CD4-positive, alpha-beta T cell (primary cell): ENCODE measurements at regions of chr7 and their contacts with region 1.

Region 1: DNA sequence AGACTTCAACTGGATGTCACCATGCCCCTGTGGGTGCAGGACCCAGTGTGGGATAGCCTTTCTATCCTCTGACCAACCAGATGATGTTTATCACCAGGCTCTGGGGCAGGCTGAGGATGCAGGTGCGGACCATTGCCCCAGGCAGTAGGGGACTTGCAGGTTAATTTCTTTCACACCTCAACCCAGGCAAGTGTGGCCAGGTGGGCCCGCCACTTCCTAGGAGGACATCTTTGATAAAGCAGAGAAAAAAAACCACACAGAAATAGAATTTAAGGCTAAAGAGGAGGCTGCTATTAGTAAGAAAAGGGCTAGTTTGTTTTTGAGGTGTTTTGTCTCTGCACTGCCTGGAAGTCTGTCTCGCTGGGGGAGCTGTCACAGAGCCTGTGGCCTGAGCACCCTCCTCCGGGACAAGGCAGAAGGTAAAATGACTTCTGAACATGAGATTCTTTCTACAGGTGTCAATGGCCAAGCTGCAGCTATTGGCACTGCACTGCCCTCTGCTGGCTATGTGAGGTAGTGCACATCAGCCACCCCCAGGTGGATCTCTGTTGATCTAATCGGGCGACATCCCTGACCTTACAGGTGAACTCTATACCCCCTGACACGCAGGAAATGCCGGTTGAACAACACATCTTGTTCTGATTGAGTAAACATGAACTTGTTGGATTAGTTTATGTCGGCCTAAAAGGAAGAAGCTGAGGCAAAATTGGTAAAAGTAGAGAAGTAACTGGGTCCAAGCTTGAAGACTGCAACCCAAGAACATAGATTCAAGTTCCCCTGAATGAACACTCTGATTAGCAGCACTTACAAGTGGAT is 21.0 kb downstream of the UPP1 start:
- DNase-seq: peak; percentile 79 to 96 (median 91)
- ATAC-seq: peak; percentile 98
- H3K4me3 ChIP-seq: no peak overlapping the region
- H3K4me3 Mint-ChIP-seq: no peak overlapping the region
- H3K27ac ChIP-seq: no peak overlapping the region
- H3K27ac Mint-ChIP-seq: peak overlapping the region; percentile 25
- H3K4me1 ChIP-seq: peaks cover 12% of the 10 kb centered on the region
- H3K4me1 Mint-ChIP-seq: peaks cover 10% of the 10 kb centered on the region
- H3K27me3 ChIP-seq: no peaks in the 10 kb centered on the region
- H3K27me3 Mint-ChIP-seq: no peaks in the 10 kb centered on the region
- CTCF ChIP-seq: peak; percentile 98

Region 2: GRCh38 chr7:47557986-47558670 is 551.9 kb before region 1 on chr7:
- CTCF ChIA-PET with region 1: no interaction called
- POLR2A ChIA-PET with region 1: no interaction called
- intact Hi-C with region 1: no loop called
- DNase-seq: no peak
- ATAC-seq: no peak
- H3K4me3 ChIP-seq: no peak overlapping the region
- H3K4me3 Mint-ChIP-seq: no peak overlapping the region
- H3K27ac ChIP-seq: no peak overlapping the region
- H3K27ac Mint-ChIP-seq: no peak overlapping the region
- H3K4me1 ChIP-seq: no peaks in the 10 kb centered on the region
- H3K4me1 Mint-ChIP-seq: no peaks in the 10 kb centered on the region
- H3K27me3 ChIP-seq: no peaks in the 10 kb centered on the region
- H3K27me3 Mint-ChIP-seq: no peaks in the 10 kb centered on the region
- CTCF ChIP-seq: no peak

Region 3: DNA sequence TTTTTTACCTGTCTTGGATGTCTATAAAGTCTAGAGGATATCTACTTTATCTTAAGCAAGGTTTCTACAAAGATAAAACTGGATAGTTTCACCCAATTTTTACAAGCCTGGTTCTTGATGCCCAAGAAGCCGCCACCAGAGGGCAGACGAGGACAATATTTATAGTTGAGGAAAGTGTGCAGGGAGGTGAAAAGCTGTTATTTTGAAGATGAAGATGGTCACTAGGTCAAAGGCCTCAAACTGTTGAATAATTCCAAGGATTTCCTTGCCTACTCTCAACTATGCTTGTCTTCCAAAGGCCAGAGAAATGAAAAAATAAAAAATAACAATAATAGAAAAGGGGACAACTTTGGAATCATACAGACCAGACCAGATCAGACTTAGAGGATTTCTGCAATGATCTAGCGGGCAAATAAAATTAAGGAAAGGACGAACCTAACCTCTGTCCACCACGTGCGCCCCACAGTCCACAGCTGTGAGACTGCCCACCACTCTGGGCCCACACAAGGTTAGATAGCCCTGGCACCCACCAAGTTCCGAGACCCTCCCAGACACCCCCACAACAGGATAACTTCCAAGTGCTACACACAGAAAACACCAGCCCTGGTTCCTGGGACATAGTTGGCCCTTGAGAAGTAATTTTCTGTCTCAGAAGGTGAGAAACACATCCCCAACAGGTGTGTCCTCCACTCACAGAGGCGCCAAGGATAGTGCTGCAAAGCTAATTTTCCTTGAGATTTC is 164.6 kb before region 1 on chr7:
- CTCF ChIA-PET with region 1: interaction called, 25 read pairs
- POLR2A ChIA-PET with region 1: no interaction called
- intact Hi-C with region 1: loop called (anchors 1 kb)
- DNase-seq: peak; percentile 57 to 84 (median 72)
- ATAC-seq: peak; percentile 54
- H3K4me3 ChIP-seq: no peak overlapping the region
- H3K4me3 Mint-ChIP-seq: no peak overlapping the region
- H3K27ac ChIP-seq: no peak overlapping the region
- H3K27ac Mint-ChIP-seq: no peak overlapping the region
- H3K4me1 ChIP-seq: no peaks in the 10 kb centered on the region
- H3K4me1 Mint-ChIP-seq: no peaks in the 10 kb centered on the region
- H3K27me3 ChIP-seq: no peaks in the 10 kb centered on the region
- H3K27me3 Mint-ChIP-seq: no peaks in the 10 kb centered on the region
- CTCF ChIP-seq: peak; percentile 86

Region 4: GRCh38 chr7:47979145-47979831 is 130.8 kb before region 1 on chr7 and contains the start of gene HUS1:
- CTCF ChIA-PET with region 1: interaction called, 12 read pairs
- POLR2A ChIA-PET with region 1: no interaction called
- intact Hi-C with region 1: loop called in 1 of 2 experiments (anchors 1 kb)
- DNase-seq: peak; percentile 85 to 96 (median 92)
- ATAC-seq: peak; percentile 98
- H3K4me3 ChIP-seq: peak within 1 kb of the TSS; percentile 83
- H3K4me3 Mint-ChIP-seq: peak within 1 kb of the TSS; percentile 92
- H3K27ac ChIP-seq: peak within 1 kb of the TSS; percentile 82 to 95
- H3K27ac Mint-ChIP-seq: peak within 1 kb of the TSS; percentile 92
- H3K4me1 ChIP-seq: peaks cover 22% of the 10 kb centered on the region
- H3K4me1 Mint-ChIP-seq: peaks cover 36% of the 10 kb centered on the region
- H3K27me3 ChIP-seq: no peaks in the 10 kb centered on the region
- H3K27me3 Mint-ChIP-seq: no peaks in the 10 kb centered on the region
- CTCF ChIP-seq: no peak
- total RNA-seq, gene HUS1: 77.8 to 83.1 TPM

Region 5: DNA sequence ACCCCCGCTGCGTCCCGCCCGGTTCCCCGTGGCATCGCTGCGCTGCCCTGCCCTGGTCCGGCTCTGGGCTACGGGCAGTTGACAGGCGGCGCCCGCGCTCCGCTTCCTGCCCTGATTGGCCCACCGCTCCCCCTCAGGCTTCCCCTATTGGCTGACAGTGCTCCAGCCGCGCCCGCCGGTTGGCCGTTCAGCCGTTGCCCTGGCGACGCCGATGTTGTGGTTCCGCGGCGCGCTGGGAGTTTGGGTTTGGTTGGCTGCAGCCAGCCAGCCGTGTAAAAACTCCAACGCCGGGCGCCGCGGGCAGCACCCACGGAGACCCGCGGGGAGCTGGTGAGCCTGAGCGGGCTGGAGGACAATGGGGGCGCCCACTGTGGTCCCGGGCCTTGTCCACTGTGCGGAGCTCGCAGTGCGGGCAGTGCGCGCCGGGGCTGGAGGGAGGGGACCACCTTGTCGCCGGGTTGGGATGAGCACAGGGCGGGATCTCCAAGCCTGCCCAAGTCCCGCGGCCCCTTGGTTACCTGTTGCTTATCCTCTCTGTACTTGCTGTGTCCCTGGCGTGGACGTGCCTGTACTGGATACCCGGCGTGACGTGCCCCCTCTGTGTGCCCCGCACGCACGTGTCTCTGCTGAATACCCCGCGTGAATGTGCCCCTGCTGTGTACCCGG is 74.6 kb before region 1 on chr7 and contains the start of gene C7orf57:
- CTCF ChIA-PET with region 1: interaction called, 7 read pairs
- POLR2A ChIA-PET with region 1: no interaction called
- intact Hi-C with region 1: loop called (anchors 2 to 5 kb)
- DNase-seq: peak; percentile 75 to 92 (median 84)
- ATAC-seq: peak; percentile 96
- H3K4me3 ChIP-seq: peak within 1 kb of the TSS; percentile 62
- H3K4me3 Mint-ChIP-seq: peak within 1 kb of the TSS; percentile 83
- H3K27ac ChIP-seq: no peak within 1 kb of the TSS
- H3K27ac Mint-ChIP-seq: no peak within 1 kb of the TSS
- H3K4me1 ChIP-seq: peaks cover 15% of the 10 kb centered on the region
- H3K4me1 Mint-ChIP-seq: peaks cover 13% of the 10 kb centered on the region
- H3K27me3 ChIP-seq: peaks cover 3 to 13% of the 10 kb centered on the region in 2 experiments
- H3K27me3 Mint-ChIP-seq: peaks cover 57% of the 10 kb centered on the region
- CTCF ChIP-seq: peak; percentile 42
- total RNA-seq, gene C7orf57: 0.56 TPM in 1 of 2 experiments, not detected in the other

Region 6: DNA sequence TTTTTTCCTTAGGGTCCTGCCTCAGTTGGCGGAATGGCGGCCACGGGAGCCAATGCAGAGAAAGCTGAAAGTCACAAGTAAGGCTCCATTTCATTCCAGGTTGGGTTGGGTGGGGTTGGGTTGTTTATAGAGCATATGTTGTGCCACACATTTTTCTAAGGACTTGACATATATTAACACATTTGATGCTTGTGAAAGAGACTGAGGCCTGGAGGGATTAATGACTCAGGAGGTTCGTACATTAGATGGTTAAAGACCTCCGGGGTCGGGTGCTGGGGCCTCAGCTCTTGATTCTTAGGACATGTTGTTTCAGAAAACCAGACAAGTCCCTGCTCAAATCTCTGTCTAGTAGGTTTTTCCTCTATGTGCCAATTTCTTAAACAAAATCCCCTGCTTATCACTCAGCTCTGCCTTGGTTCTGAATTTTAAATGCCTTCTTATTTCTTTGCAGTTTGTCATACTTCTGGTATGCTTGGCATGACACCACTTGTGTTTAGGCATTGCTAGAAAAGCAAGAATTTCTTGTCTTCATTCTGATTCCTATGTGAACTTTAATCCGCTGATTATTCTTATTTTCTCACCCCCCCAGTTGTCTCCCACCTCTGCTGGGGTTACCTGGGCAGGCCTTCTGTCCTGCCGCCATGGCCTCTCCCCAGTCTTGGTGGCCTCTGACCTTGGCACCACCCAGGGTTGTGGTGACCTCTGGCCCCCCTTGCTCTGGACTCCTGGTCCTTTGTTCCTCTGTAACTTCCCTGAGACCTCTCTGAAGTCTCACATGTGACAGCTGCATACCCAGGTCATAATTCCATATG is 15.1 kb before region 1 on chr7:
- CTCF ChIA-PET with region 1: interaction called, 12 read pairs
- POLR2A ChIA-PET with region 1: interaction called, 13 read pairs
- intact Hi-C with region 1: no loop called
- DNase-seq: no peak
- ATAC-seq: no peak
- H3K4me3 ChIP-seq: no peak overlapping the region
- H3K4me3 Mint-ChIP-seq: peak overlapping the region; percentile 8
- H3K27ac ChIP-seq: peak overlapping the region; percentile 3 to 85
- H3K27ac Mint-ChIP-seq: peak overlapping the region; percentile 97
- H3K4me1 ChIP-seq: peaks cover 89% of the 10 kb centered on the region
- H3K4me1 Mint-ChIP-seq: peaks cover 80% of the 10 kb centered on the region
- H3K27me3 ChIP-seq: no peaks in the 10 kb centered on the region
- H3K27me3 Mint-ChIP-seq: no peaks in the 10 kb centered on the region
- CTCF ChIP-seq: no peak